RWPE1 (cell line): ENCODE measurements at regions of chr1 and their contacts with region 1.

Region 1: DNA sequence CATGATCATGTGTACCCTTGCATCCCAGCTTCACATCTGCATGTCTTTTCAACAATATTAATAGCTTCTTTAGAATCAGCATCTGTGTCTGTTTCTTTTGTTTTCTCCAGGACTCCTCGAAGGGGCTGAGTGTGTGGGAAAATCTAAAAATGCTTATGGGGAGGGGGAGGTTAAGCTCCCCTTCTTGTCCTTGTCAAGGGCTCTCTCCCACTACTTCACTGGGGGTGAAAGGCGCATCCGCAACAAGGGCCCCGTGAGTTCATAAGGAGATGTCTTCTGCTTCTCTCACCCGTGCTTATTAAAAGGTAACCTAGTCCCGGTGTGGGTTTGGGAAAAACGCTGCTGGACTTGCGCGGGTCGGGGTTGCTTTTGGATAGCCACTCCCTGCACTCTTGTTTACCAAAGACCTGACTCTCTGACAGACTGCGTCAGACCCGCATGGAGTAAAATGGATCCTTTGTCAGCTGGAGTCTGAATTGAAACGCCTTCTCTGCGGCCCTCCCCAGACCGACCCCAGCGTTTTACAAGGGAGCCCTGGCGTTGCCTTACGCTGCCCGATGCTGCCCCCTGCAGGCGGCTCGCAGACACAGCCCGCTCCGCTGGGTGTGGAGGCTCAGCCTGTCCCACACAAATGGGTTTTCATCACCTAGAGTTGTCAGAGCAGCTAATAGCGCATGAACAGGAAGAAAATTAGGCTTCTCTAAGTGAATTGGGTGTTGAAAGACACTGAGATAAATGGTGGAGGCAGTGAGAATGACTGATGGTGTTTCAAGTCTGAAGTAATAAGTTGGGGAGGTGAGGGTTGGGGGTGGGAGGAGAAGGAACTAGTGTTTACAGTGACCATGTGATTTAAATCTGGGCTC is 53.8 kb downstream of the IER5 start:
- DNase-seq: peak; percentile 87
- H3K27ac ChIP-seq: peak overlapping the region; percentile 59
- CTCF ChIP-seq: peak; percentile 91

Region 2: DNA sequence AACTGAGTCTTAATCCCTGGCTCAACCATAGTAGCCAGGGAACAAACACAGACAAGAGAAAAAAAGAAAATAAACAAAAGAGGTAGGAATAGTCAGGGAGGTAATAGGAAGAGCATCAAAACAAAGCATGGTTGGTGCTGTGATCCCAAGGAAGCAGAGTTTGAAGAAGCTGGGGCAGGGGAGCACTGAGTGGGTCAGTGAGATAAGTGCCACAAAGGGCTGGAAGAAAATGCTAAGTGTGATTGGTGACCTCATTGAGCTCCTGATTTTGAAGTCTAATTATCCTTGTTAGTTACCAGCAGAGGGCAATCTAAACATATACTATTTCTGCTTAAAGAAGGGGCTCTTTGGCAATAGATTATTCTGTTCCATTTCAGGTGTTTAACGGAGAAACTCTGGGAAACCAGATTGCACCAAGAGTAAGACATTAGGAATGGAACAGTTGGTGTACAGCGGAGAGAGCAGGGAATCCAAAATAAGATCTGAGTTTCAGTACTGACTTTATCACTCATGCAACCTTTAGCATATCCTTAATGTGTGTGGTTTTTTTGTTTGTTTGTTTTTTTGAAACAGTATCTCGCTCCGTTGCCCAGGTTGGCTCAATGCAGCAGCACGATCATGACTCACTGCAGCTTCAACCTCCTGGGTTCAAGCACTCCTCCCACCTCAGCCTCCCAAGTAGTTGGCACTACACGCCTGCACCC is 260.4 kb before region 1 on chr1:
- CTCF ChIA-PET with region 1: interaction called, 13 read pairs
- POLR2A ChIA-PET with region 1: no interaction called
- DNase-seq: peak; percentile 44
- H3K27ac ChIP-seq: no peak overlapping the region
- CTCF ChIP-seq: peak; percentile 50

Region 3: GRCh38 chr1:181099152-181100014 is 42.9 kb before region 1 on chr1:
- CTCF ChIA-PET with region 1: interaction called, 63 read pairs
- POLR2A ChIA-PET with region 1: interaction called, 6 read pairs
- DNase-seq: peak; percentile 90
- H3K27ac ChIP-seq: peak overlapping the region; percentile 74
- CTCF ChIP-seq: no peak

Region 4: GRCh38 chr1:181112071-181112929 is 30.0 kb before region 1 on chr1:
- CTCF ChIA-PET with region 1: interaction called, 12 read pairs
- POLR2A ChIA-PET with region 1: no interaction called
- DNase-seq: peak; percentile 99
- H3K27ac ChIP-seq: peak overlapping the region; percentile 92
- CTCF ChIP-seq: no peak

Region 5: DNA sequence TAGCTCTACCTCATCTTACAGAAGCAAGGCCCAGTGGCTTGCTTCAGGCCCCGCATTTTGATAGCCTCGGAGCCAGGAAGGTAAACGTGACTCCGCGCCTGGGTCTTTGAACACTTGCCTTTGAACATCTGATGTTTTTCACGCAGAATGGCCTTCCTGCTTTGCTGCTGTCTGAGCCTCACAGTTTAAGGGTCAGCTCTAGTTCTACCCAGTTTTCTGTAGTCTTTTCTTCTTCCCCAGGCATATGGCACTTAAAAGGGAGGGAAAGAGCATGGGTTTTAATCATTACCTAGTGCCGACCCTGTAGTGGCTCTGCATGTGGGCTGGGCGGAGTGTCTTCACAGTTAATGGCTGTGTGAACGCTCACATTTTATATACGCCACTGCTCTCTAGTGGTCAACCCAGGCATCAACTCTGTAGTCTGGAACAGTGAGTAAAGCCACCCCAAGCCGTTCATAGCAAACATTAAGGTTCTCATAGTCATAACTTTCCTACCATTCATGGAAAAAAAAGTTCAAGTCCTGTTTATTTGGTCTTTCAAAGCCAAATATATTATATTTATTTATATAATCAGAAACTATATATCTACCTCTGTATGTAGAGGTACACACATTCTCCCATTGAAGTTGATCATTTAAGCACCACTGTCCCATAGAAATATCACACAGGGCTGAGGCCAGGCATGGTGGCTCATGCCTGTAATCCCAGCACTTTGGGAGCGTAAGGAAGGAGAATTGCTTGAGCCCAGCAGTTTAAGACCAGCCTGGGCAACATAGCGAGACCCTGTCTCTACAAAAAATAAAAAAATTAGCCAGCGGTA is 24.3 kb after region 1 on chr1:
- CTCF ChIA-PET with region 1: interaction called, 21 read pairs
- POLR2A ChIA-PET with region 1: no interaction called
- DNase-seq: peak; percentile 85
- H3K27ac ChIP-seq: 0 out of 2 replicates have a peak overlapping the region, but pooled peaks have one; percentile 20
- CTCF ChIP-seq: peak; percentile 84